Dorsolateral prefrontal cortex (tissue), 120 donors: ENCODE measurements at regions of chr7 and their contacts with region 1.

Region 1: GRCh38 chr7:123148855-123149254 is 50.9 kb downstream of the SLC13A1 start:
- DNase-seq: no peak
- H3K4me3 ChIP-seq: no peak overlapping the region
- H3K27ac ChIP-seq: no peak overlapping the region
- H3K27me3 ChIP-seq: peaks cover 0 to 5% (median 0%) of the 10 kb centered on the region in 45 donors
- CTCF ChIP-seq: peak in 7 of 56 donors; percentile 8 to 29 (median 16)

Region 2: DNA sequence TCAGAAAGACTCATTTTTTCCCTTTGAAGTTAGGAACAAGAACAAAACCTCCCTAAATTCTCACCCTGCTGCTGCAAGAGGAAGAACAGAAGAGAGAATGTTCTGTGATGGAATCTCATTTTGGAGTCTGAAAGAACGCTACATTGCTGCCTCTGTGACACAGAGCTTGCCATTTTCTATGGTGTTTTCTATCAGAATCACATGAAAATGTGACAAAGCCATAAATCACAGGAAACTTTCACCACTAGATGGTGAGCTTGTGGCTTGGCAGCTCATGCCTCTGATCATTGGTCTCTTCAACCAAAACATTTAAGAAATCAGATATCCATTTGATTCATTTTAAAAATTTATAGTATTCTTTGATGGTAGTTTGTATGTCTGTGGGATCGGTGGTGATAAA is 345.5 kb before region 1 on chr7:
- intact Hi-C with region 1: loop called (anchors 10 kb)
- DNase-seq: peak in 3 of 10 donors; percentile 28 to 51 (median 30)
- H3K4me3 ChIP-seq: peak overlapping the region in 3 of 59 donors; percentile 2 to 27 (median 4)
- H3K27ac ChIP-seq: peak overlapping the region in 50 of 59 donors; percentile 7 to 84 (median 62)
- H3K27me3 ChIP-seq: no peaks in the 10 kb centered on the region
- CTCF ChIP-seq: peak; percentile 43 to 76 (median 66)